Dendritic cell treated with granulocyte-macrophage colony-stimulating factor and Interleukin-4, amounts not matched to agents 40 ng/mL and 50 ng/mL, for 4 days (primary cell): ENCODE measurements at regions of chr3 and their contacts with region 1.

Region 1: DNA sequence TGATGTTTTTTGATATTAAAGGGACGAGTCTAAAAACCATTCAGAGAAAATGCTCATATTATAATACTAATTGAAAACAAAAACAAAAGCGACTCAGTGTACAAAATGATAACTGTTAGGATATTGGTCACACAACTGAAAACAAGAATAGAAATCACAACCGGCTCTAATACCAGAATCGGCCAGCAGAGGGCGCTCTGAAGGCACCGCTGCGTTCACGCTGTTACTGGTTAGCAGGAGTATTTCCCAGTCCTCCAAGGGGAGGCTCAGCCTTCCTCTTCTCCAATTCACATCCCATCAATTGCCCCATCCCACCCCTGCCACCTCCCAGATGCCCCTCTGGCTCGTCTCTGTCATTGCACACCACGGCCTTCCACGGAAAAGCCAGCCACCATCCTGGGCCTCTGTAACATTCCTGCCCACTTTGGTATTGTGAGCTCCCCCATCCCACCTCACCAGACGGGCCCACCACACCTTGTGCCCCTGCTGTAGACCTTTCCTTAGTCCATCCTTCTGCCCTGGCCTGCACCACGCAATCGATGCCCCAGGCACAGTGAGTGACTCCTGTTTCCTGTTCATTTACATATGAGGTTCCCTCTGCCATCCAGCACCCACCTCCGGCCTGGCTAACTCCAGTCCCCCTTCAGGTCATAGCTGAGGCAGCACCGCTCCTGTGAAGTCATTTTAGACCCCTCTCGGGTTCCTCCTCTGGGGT is 8.5 kb downstream of the FAM107A start:
- H3K4me3 Mint-ChIP-seq: no peak overlapping the region
- H3K27ac Mint-ChIP-seq: no peak overlapping the region
- H3K4me1 Mint-ChIP-seq: peaks cover 6% of the 10 kb centered on the region
- H3K27me3 Mint-ChIP-seq: no peaks in the 10 kb centered on the region

Region 2: DNA sequence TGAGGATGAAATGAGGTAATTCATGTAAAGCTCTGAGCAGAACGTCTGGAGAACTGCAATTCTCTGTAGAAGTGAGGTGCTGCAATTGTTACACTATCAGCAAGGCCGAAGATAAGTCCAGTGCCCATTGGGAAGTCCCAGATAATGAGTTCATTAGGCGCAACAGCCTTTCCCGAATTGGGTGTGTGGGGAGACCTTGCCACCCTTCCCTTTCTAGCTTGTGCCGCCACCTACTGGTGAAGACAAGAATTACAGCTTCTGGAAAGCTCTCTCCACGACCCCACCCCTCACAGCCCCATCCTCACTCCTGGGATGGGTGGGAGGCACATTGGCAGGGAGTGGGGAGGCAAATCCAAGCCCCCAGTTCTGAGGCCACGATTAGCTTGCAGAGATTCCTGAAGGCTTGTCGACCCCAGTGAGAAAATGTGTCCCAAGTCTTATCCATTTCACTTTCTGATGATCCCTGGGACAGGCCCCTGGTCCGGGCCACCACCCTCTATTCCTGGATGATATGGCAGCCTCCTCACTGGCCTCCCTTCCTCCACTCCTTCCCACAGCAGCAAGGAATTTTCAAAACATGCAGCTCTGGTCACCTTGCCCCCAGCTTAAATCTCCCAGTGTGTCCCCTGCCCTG is 61.5 kb after region 1 on chr3:
- intact Hi-C with region 1: loop called (anchors 1 kb)
- H3K4me3 Mint-ChIP-seq: no peak overlapping the region
- H3K27ac Mint-ChIP-seq: no peak overlapping the region
- H3K4me1 Mint-ChIP-seq: no peaks in the 10 kb centered on the region
- H3K27me3 Mint-ChIP-seq: peaks cover 5% of the 10 kb centered on the region